Posterior cingulate gyrus (tissue), 11 donors: ENCODE measurements at regions of chr14 and their contacts with region 1.

Region 1: GRCh38 chr14:103500148-103500990 is 22.3 kb downstream of the CKB start:
- DNase-seq: peak; percentile 86 to 99 (median 96)

Region 2: GRCh38 chr14:103391048-103391447 is 109.3 kb before region 1 on chr14:
- intact Hi-C with region 1: loop called (anchors 10 kb)
- DNase-seq: no peak

Region 3: GRCh38 chr14:103763730-103764488 is 263.5 kb after region 1 on chr14:
- intact Hi-C with region 1: no loop called
- DNase-seq: no peak